AG04450 (cell line): ENCODE measurements at regions of chr5 and their contacts with region 1.

Region 1: DNA sequence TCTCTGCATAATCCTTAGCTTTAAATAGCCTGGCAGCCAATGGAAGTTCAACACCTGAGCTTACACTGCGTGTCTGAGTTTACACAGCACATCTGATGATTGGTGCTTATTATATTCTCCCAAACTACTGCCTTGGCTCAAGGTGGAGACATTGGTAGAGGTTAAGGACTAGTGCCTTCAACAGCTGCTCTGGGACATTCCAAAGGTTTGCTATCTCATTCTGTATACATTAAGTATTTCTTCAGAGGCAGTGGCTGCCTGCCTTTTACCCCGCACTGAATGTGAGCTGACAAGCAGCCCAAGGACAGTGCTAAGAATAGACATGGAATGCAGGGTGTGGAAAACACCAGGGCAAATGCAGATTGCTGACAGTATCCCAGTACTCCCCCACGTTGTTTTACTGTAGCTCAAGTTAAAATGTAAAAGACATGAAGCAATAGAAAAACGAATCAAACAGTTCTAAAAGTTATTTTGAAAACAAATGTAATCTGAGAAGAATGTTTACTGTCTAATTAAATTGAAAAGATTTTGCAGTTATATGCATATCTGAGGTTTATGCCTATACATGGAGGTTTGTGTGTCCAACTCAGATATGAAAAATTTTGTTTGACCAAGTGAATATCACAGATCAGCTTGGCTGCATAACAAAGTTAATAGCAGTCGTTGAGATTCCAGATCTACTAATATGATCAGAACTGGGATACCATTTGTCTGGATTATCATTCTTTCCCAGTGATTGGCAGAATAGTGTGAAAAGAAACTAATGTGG is 1.8 kb downstream of the HSPB3 start:
- DNase-seq: peak; percentile 72
- H3K4me3 ChIP-seq: no peak overlapping the region
- H3K27ac ChIP-seq: peak overlapping the region; percentile 71
- H3K27me3 ChIP-seq: no peaks in the 10 kb centered on the region
- CTCF ChIP-seq: no peak

Region 2: GRCh38 chr5:54443270-54443669 is 14.0 kb before region 1 on chr5:
- CTCF ChIA-PET with region 1: interaction called, 16 read pairs
- POLR2A ChIA-PET with region 1: interaction called, 3 read pairs
- DNase-seq: peak; percentile 24
- H3K4me3 ChIP-seq: no peak overlapping the region
- H3K27ac ChIP-seq: no peak overlapping the region
- H3K27me3 ChIP-seq: peaks cover 23% of the 10 kb centered on the region
- CTCF ChIP-seq: peak; percentile 70

Region 3: DNA sequence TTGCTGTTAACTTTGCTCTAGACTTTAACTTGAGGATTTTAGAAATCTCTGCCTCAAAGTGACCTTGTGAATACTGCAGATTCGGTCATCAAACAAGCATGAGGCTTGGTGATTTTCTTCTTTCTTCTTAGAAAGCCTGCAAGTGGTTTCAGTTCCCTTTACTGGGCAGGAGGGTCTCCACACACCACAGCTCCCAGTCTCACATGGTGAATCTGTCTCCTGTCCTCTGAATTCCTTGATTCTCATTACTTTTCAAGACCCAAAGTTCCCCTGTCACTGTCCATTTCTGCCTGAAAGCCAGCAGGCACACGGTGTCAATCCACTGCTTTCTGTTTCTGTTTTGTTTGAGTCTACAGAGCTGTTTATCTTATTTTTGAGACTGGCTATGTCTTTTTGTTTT is 12.3 kb after region 1 on chr5:
- CTCF ChIA-PET with region 1: no interaction called
- POLR2A ChIA-PET with region 1: interaction called, 12 read pairs
- DNase-seq: no peak
- H3K4me3 ChIP-seq: peak overlapping the region; percentile 23
- H3K27ac ChIP-seq: peak overlapping the region; percentile 77
- H3K27me3 ChIP-seq: no peaks in the 10 kb centered on the region
- CTCF ChIP-seq: no peak

Region 4: GRCh38 chr5:54570916-54571315 is 113.6 kb after region 1 on chr5:
- CTCF ChIA-PET with region 1: no interaction called
- POLR2A ChIA-PET with region 1: no interaction called
- DNase-seq: no peak
- H3K4me3 ChIP-seq: no peak overlapping the region
- H3K27ac ChIP-seq: no peak overlapping the region
- H3K27me3 ChIP-seq: no peaks in the 10 kb centered on the region
- CTCF ChIP-seq: no peak

Region 5: DNA sequence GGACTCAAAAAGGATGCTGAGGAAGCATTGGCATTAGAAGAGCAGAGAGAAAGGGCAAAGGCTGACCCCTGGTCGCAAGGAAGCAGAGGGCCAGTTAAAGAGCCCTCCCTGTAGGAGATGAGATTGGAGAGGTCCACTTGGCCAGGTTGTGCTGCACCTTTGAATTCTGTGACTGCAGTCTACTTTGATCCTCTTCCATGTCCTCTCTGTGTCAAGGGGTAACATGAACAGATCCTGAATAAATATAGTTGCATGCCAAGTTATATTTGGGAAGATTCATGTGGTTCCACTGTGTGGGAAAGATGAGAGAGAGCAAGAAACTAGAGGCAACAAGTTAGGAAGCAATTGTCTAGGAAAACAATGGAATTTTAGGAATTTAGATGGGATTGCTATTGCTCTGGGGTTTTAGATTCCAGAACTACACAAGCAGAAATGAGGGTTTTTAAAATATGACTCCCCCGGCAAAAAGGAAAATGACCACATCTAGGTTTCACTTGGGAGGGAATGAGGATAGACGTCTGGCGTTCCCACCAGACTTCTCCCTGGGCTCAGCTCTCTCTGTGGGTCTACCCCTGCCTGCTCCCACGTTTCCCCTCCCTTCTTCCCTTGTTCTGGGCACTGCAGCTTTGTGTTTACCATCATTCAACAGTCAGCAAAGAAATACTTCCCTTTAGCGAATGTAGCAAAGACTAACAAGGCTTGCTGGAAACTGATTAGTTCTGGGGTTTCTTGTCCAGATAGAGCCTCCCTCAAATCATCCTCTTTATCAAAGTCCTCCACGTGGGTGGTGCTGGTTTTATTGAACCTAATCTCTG is 123.9 kb after region 1 on chr5:
- CTCF ChIA-PET with region 1: interaction called, 13 read pairs
- POLR2A ChIA-PET with region 1: no interaction called
- DNase-seq: no peak
- H3K4me3 ChIP-seq: no peak overlapping the region
- H3K27ac ChIP-seq: peak overlapping the region; percentile 68
- H3K27me3 ChIP-seq: no peaks in the 10 kb centered on the region
- CTCF ChIP-seq: no peak